H1 (cell line): ENCODE measurements at regions of chr1 and their contacts with region 1.

Region 1: GRCh38 chr1:36149237-36149972 is at the start of gene TRAPPC3:
- DNase-seq: peak; percentile 99 to 100
- H3K4me3 ChIP-seq: peak within 1 kb of the TSS; percentile 68 to 85 (median 79)
- H3K27ac ChIP-seq: peak within 1 kb of the TSS; percentile 62
- H3K4me1 ChIP-seq: peaks cover 8 to 19% (median 15%) of the 10 kb centered on the region in 4 experiments
- H3K27me3 ChIP-seq: peaks cover 11 to 21% (median 17%) of the 10 kb centered on the region in 4 experiments
- CTCF ChIP-seq: peak; percentile 95 to 99 (median 98)
- EP300 ChIP-seq: peak in 1 of 2 experiments; percentile 71; a peak in 1 of 3 replicates
- POLR2A ChIP-seq: peak in 1 of 2 experiments; percentile 73; a peak in 2 of 3 replicates
- RAD21 ChIP-seq: peak; percentile 98
- total RNA-seq, gene TRAPPC3: 42.0 and 47.8 TPM in 2 replicates

Region 2: GRCh38 chr1:36123356-36123755 is 26.0 kb before region 1 on chr1:
- CTCF ChIA-PET with region 1: interaction called, 738 read pairs
- POLR2A ChIA-PET with region 1: interaction called, 4 read pairs
- DNase-seq: no peak
- H3K4me3 ChIP-seq: no peak overlapping the region
- H3K27ac ChIP-seq: no peak overlapping the region
- H3K4me1 ChIP-seq: peaks cover 0 to 13% (median 6%) of the 10 kb centered on the region in 4 experiments; a peak in 6 of 7 replicates
- H3K27me3 ChIP-seq: peaks cover 16 to 38% (median 30%) of the 10 kb centered on the region in 4 experiments
- CTCF ChIP-seq: no peak
- EP300 ChIP-seq: no peak
- POLR2A ChIP-seq: no peak
- RAD21 ChIP-seq: no peak

Region 3: DNA sequence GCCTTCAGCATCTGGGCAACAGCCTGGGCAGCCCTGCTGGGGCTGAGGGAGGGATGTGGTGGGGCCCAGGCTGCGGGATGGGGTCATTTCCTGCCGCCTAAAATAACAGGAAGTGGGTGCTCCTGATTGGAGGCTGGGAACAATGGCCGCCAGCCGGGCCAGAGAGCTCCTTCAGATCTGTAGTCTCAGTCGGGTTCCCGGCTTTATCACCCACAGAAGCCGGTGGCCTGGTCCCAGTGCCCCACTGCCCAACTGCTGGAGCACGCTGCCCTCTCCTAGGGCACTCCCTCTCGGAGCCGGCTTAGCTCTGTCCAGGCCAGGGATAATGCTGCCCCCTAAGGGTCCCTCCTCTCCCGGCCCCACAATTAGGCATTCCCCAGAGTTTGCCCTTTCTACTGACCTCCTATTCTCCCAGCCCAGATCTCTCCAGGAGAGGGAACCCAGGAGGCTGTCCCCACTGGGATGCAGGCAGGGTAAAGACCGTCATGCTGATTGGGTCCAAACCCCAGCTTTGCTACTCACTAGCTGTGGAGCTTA is 11.6 kb after region 1 on chr1:
- CTCF ChIA-PET with region 1: interaction called, 162 read pairs
- POLR2A ChIA-PET with region 1: interaction called, 49 read pairs
- DNase-seq: peak in 1 of 2 experiments; percentile 82
- H3K4me3 ChIP-seq: peak overlapping the region; percentile 29 to 60 (median 48)
- H3K27ac ChIP-seq: peak overlapping the region; percentile 89; the same call in 1 of the 2 replicates
- H3K4me1 ChIP-seq: peaks cover 0 to 22% (median 13%) of the 10 kb centered on the region in 4 experiments; a peak in 6 of 7 replicates
- H3K27me3 ChIP-seq: no peaks in the 10 kb centered on the region
- CTCF ChIP-seq: peak; percentile 54 to 69 (median 59)
- EP300 ChIP-seq: no peak
- POLR2A ChIP-seq: peak; percentile 93 to 96
- RAD21 ChIP-seq: peak; percentile 42 to 45

Region 4: GRCh38 chr1:36217670-36218069 is 68.3 kb after region 1 on chr1:
- CTCF ChIA-PET with region 1: interaction called, 38 read pairs
- POLR2A ChIA-PET with region 1: interaction called, 17 read pairs
- DNase-seq: no peak
- H3K4me3 ChIP-seq: no peak overlapping the region
- H3K27ac ChIP-seq: no peak overlapping the region
- H3K4me1 ChIP-seq: no peaks in the 10 kb centered on the region
- H3K27me3 ChIP-seq: no peaks in the 10 kb centered on the region
- CTCF ChIP-seq: peak in 2 of 3 experiments; percentile 15 to 28; a peak in 2 of 4 replicates
- EP300 ChIP-seq: no peak
- POLR2A ChIP-seq: no peak
- RAD21 ChIP-seq: peak; percentile 31 to 45

Region 5: DNA sequence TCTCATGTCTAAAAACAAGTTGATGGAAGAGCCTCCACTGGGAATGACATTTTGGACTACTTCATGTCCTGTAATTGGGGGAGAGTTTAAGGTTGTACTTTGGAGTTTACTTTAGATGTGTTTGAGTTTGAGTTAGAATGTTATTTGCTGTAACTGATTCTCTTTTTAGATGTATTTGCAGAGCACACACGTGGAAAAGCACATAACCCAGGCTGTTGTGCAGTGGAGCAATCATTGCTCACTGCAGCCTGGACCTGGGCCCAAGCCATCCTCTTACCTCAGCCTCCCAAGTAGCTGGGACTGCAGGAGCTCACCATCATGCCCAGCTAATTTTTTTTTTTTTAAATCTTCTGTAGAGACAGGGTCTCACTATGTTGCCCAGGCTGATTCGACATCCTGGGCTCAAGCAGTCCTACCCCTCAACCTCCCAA is 120.0 kb after region 1 on chr1:
- CTCF ChIA-PET with region 1: interaction called, 12 read pairs
- POLR2A ChIA-PET with region 1: no interaction called
- DNase-seq: no peak
- H3K4me3 ChIP-seq: no peak overlapping the region
- H3K27ac ChIP-seq: no peak overlapping the region
- H3K4me1 ChIP-seq: no peaks in the 10 kb centered on the region
- H3K27me3 ChIP-seq: no peaks in the 10 kb centered on the region
- CTCF ChIP-seq: no peak
- EP300 ChIP-seq: no peak
- POLR2A ChIP-seq: no peak
- RAD21 ChIP-seq: no peak

Region 6: DNA sequence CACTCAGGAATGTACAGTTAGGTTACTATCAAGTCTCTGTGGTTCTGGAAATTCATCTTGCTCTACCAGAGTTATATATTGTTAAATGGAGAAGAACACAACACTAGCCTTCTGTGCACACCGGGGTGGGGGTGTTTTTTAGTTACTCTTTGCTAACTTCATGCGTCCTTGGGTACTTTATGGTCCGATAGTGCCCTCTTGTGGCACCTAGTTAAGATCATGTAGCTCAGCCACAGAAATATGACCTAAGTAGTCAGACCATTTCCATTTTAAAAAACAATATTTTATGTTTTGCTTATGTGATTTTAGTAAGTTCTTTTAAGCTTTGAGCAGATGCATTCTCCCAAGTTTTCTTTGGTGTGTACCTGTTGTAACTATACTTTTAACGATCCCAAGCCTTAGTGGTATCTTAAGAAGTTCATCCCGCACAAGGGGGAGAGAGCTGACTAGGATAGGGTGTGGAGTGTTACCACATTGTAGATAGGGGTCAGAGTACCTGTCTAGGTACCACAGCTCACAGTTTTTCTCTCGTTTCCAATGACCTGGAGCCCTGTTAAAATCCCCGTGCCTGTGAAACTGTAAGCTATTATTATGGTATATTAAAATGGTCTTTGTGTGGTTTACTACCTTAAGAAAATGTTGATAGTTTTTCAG is 136.2 kb after region 1 on chr1:
- CTCF ChIA-PET with region 1: interaction called, 42 read pairs
- POLR2A ChIA-PET with region 1: interaction called, 3 read pairs
- DNase-seq: peak in 1 of 2 experiments; percentile 53
- H3K4me3 ChIP-seq: no peak overlapping the region
- H3K27ac ChIP-seq: no peak overlapping the region
- H3K4me1 ChIP-seq: no peaks in the 10 kb centered on the region
- H3K27me3 ChIP-seq: no peaks in the 10 kb centered on the region
- CTCF ChIP-seq: peak in 2 of 3 experiments; percentile 66 to 67; a peak in 3 of 4 replicates
- EP300 ChIP-seq: no peak
- POLR2A ChIP-seq: no peak
- RAD21 ChIP-seq: peak; percentile 78 to 81

Region 7: DNA sequence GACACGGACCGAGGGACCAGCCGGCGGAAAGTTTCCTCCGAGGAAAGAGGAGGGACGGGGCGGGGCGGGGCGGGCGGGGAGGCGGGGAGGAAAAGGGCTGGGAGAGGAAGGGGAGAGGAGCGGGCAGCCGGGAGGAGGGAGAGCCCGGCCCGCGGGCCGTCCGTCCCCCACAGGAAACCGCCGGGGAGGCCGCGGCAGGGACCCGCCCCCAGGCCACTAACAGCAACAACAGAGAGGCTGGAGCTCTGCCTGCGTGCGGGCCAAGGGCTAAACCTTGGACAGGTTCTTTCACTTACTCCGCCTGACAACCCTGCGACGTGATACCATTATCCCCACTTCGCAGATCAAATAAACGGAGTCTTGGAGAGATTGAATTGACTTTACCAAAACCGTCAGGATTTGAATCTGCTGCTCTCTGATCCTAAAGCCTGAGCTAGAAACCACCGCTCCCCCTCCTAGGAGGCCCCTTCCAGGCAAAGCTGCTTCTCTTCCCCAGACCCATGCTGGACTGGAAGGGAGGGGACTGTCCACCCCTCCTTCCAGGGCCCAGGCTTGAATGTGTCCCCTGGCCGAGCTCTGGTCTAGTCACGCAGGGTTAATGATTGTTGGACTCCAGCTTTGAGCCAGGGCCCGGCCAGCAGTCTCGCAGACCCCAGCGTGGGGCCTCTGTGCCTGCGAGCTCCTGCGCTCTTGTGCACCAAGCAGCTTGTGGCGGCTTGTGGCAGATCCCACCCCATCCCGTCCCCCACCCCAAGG is 174.4 kb after region 1 on chr1 and contains the start of gene EVA1B:
- CTCF ChIA-PET with region 1: no interaction called
- POLR2A ChIA-PET with region 1: interaction called, 16 read pairs
- DNase-seq: peak in 1 of 2 experiments; percentile 79
- H3K4me3 ChIP-seq: peak within 1 kb of the TSS; percentile 27 to 67 (median 49)
- H3K27ac ChIP-seq: no peak within 1 kb of the TSS
- H3K4me1 ChIP-seq: peaks cover 0 to 28% (median 16%) of the 10 kb centered on the region in 4 experiments; a peak in 6 of 7 replicates
- H3K27me3 ChIP-seq: peaks cover 0 to 39% (median 20%) of the 10 kb centered on the region in 4 experiments; a peak in 5 of 7 replicates
- CTCF ChIP-seq: no peak
- EP300 ChIP-seq: no peak
- POLR2A ChIP-seq: no peak; a peak in 1 of 3 replicates
- RAD21 ChIP-seq: no peak
- total RNA-seq, gene EVA1B: 10.0 and 10.3 TPM in 2 replicates